CD4-positive, alpha-beta T cell (primary cell): ENCODE measurements at regions of chr14 and their contacts with region 1.

Region 1: GRCh38 chr14:72523424-72524294 is 370.2 kb downstream of the DPF3 start:
- DNase-seq: no peak
- ATAC-seq: no peak
- H3K4me3 ChIP-seq: no peak overlapping the region
- H3K4me3 Mint-ChIP-seq: no peak overlapping the region
- H3K27ac ChIP-seq: no peak overlapping the region
- H3K27ac Mint-ChIP-seq: no peak overlapping the region
- H3K4me1 ChIP-seq: peaks cover 23% of the 10 kb centered on the region
- H3K4me1 Mint-ChIP-seq: peaks cover 49% of the 10 kb centered on the region
- H3K27me3 ChIP-seq: no peaks in the 10 kb centered on the region
- H3K27me3 Mint-ChIP-seq: no peaks in the 10 kb centered on the region
- CTCF ChIP-seq: no peak

Region 2: DNA sequence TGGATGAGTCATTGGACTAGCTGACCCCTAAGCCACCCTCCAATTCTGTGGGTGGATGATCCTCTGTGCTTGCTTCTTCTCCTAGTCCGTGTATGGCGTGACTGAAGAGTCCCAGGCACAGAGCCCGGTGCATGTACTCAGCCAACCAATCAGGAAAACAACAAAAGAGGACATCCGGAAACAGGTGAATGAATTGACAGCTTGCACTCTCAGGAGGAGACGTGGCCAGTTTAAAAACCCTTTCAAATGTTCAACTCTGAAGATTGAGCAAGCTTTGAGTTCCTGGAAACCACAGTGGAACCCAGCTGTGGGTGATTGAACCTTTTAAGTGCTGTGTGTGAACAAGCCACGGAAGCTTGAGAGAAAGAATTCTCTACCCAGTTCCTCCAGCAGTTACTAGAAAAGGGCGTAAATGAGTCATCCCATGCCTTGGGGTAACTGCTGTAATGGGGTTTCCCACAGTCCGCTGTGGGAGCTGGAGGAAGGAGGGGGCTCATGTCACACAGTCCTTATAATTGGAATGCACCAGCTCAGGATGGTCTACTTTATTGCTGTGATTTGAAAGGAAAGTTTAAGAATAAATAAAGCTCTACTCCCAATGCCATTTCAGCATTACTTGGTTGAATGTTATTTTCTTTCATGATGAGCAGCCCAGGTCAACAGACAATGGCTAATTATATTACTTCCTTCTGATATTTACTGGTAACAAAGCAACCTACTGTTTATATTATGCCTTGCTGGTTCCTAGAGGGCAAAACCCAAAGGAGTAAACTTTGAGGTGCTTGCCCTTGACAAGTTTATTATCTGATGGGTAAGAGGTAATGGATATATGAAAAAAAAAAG is 46.8 kb before region 1 on chr14:
- CTCF ChIA-PET with region 1: no interaction called
- POLR2A ChIA-PET with region 1: no interaction called
- intact Hi-C with region 1: no loop called
- DNase-seq: peak in 13 of 14 experiments; percentile 5 to 79 (median 15)
- ATAC-seq: peak; percentile 78
- H3K4me3 ChIP-seq: peak overlapping the region; percentile 31
- H3K4me3 Mint-ChIP-seq: peak overlapping the region; percentile 75
- H3K27ac ChIP-seq: peak overlapping the region in 1 of 2 donors; percentile 56
- H3K27ac Mint-ChIP-seq: peak overlapping the region; percentile 43
- H3K4me1 ChIP-seq: peaks cover 39% of the 10 kb centered on the region
- H3K4me1 Mint-ChIP-seq: peaks cover 53% of the 10 kb centered on the region
- H3K27me3 ChIP-seq: no peaks in the 10 kb centered on the region
- H3K27me3 Mint-ChIP-seq: no peaks in the 10 kb centered on the region
- CTCF ChIP-seq: no peak

Region 3: GRCh38 chr14:73655851-73656250 is 1132.2 kb after region 1 on chr14:
- CTCF ChIA-PET with region 1: no interaction called
- POLR2A ChIA-PET with region 1: no interaction called
- intact Hi-C with region 1: loop called in 1 of 2 experiments (anchors 10 kb)
- DNase-seq: no peak
- ATAC-seq: no peak
- H3K4me3 ChIP-seq: no peak overlapping the region
- H3K4me3 Mint-ChIP-seq: no peak overlapping the region
- H3K27ac ChIP-seq: no peak overlapping the region
- H3K27ac Mint-ChIP-seq: no peak overlapping the region
- H3K4me1 ChIP-seq: no peaks in the 10 kb centered on the region
- H3K4me1 Mint-ChIP-seq: no peaks in the 10 kb centered on the region
- H3K27me3 ChIP-seq: no peaks in the 10 kb centered on the region
- H3K27me3 Mint-ChIP-seq: no peaks in the 10 kb centered on the region
- CTCF ChIP-seq: no peak